T-cell (primary cell): ENCODE measurements at regions of chr11 and their contacts with region 1.

Region 1: GRCh38 chr11:46065681-46066080 is 55.6 kb downstream of the PHF21A start:
- DNase-seq: no peak
- ATAC-seq: no peak
- H3K4me3 ChIP-seq: no peak overlapping the region
- H3K4me3 Mint-ChIP-seq: no peak overlapping the region
- H3K27ac ChIP-seq: no peak overlapping the region
- H3K27ac Mint-ChIP-seq: no peak overlapping the region
- H3K4me1 ChIP-seq: no peaks in the 10 kb centered on the region
- H3K4me1 Mint-ChIP-seq: peaks cover 13 to 35% (median 13%) of the 10 kb centered on the region in 3 donors
- H3K27me3 ChIP-seq: no peaks in the 10 kb centered on the region
- H3K27me3 Mint-ChIP-seq: no peaks in the 10 kb centered on the region

Region 2: DNA sequence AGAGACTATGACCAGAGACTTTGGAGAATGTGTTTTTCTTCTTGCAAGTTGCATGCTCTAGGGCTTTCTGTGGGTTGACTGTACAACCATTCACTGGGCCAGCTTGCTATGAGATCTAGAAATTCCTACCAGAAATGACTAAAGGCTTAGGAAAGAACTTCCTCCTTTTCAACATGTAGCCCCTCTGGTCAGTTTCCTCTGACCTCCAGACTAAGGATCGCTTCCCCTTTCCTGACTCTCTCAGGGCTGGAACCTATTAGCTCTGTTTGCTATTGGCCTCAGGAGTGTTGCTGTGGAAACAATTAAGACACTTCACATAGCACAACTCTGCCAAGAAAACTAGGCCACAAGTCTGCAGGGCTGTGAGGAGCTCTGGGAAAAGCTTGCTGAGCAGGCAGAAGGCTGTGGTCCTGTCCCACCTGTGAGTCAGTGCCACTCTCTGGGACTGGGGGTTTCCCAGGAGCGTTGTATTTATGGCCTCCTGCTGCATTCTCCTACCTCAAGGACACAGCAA is 207.7 kb before region 1 on chr11:
- CTCF ChIA-PET with region 1: no interaction called
- POLR2A ChIA-PET with region 1: no interaction called
- DNase-seq: no peak
- ATAC-seq: no peak
- H3K4me3 ChIP-seq: no peak overlapping the region
- H3K4me3 Mint-ChIP-seq: no peak overlapping the region
- H3K27ac ChIP-seq: no peak overlapping the region
- H3K27ac Mint-ChIP-seq: no peak overlapping the region
- H3K4me1 ChIP-seq: peaks cover 0 to 6% of the 10 kb centered on the region in 2 experiments
- H3K4me1 Mint-ChIP-seq: peaks cover 6 to 11% (median 11%) of the 10 kb centered on the region in 3 donors
- H3K27me3 ChIP-seq: no peaks in the 10 kb centered on the region
- H3K27me3 Mint-ChIP-seq: no peaks in the 10 kb centered on the region

Region 3: GRCh38 chr11:46090375-46090774 is 24.7 kb after region 1 on chr11:
- CTCF ChIA-PET with region 1: interaction called in 1 of 2 experiments, 6 read pairs
- POLR2A ChIA-PET with region 1: interaction called in 1 of 2 experiments, 10 read pairs
- DNase-seq: no peak
- ATAC-seq: no peak
- H3K4me3 ChIP-seq: no peak overlapping the region
- H3K4me3 Mint-ChIP-seq: no peak overlapping the region
- H3K27ac ChIP-seq: no peak overlapping the region
- H3K27ac Mint-ChIP-seq: no peak overlapping the region
- H3K4me1 ChIP-seq: no peaks in the 10 kb centered on the region
- H3K4me1 Mint-ChIP-seq: peaks cover 0 to 2% (median 2%) of the 10 kb centered on the region in 3 donors
- H3K27me3 ChIP-seq: no peaks in the 10 kb centered on the region
- H3K27me3 Mint-ChIP-seq: no peaks in the 10 kb centered on the region